HepG2 (cell line): ENCODE measurements at regions of chr17 and their contacts with region 1.

Region 1: DNA sequence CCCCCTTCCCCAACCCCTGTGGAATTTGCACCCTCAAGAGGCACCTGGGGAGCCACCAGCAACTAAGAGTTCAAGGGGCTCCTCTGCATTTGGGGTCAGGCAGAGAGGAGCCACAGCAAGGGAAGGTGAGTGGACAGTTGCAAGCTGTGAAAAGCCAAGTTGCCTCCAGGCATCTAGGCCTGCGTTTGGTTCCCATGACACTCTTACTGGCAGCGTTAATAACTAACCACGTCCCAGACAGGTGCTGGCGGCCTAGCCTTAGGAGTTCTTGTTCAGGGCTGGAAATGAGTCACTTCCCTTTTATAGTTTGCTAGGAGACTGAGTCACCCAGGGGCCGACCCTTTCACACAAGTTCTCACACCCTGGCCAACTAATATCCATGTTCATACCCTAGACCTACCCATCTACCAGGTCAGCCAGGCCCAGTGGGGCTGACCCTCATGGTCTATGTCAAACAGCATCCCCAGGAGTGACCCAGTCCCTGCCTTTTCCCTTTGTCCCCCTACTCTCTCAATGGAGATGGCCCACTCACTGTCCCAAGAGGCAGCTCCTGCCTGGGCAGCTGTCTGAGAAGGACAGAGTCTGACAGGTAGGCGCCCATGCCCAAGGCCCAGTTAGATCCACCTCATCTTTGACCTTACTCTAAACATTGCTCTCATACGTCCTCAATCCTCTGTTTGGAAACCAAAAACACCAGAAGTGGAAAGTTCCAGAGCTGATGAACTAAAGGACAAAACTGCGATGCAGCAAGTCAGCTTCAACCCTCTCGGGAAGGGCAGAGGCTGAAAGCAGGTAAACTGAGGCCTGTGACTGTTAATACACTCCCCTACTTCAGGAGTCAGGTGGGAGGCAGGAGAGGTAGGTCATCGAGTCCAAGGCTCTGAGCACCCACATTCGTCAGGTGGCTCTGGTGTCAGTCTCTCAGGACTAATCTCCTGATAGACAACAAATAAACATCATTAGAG is 300.6 kb downstream of the SOX9 start:
- DNase-seq: peak; percentile 99
- ATAC-seq: peak; percentile 91
- H3K4me3 ChIP-seq: peak overlapping the region in 1 of 3 experiments; percentile 31; a peak in 2 of 6 replicates
- H3K27ac ChIP-seq: peak overlapping the region; percentile 83
- H3K4me1 ChIP-seq: peaks cover 86% of the 10 kb centered on the region
- H3K27me3 ChIP-seq: no peaks in the 10 kb centered on the region
- CTCF ChIP-seq: no peak
- EP300 ChIP-seq: peak in 1 of 2 experiments; percentile 92; a peak in 3 of 4 replicates
- POLR2A ChIP-seq: peak; percentile 48 to 68
- RAD21 ChIP-seq: peak; percentile 34

Region 2: GRCh38 chr17:72407336-72407909 is 14.0 kb before region 1 on chr17:
- CTCF ChIA-PET with region 1: no interaction called
- POLR2A ChIA-PET with region 1: interaction called, 169 read pairs
- in situ Hi-C with region 1: no loop called
- intact Hi-C with region 1: no loop called
- DNase-seq: no peak
- ATAC-seq: no peak
- H3K4me3 ChIP-seq: no peak overlapping the region
- H3K27ac ChIP-seq: peak overlapping the region; percentile 29
- H3K4me1 ChIP-seq: peaks cover 100% of the 10 kb centered on the region
- H3K27me3 ChIP-seq: no peaks in the 10 kb centered on the region
- CTCF ChIP-seq: no peak
- EP300 ChIP-seq: no peak
- POLR2A ChIP-seq: no peak
- RAD21 ChIP-seq: no peak

Region 3: DNA sequence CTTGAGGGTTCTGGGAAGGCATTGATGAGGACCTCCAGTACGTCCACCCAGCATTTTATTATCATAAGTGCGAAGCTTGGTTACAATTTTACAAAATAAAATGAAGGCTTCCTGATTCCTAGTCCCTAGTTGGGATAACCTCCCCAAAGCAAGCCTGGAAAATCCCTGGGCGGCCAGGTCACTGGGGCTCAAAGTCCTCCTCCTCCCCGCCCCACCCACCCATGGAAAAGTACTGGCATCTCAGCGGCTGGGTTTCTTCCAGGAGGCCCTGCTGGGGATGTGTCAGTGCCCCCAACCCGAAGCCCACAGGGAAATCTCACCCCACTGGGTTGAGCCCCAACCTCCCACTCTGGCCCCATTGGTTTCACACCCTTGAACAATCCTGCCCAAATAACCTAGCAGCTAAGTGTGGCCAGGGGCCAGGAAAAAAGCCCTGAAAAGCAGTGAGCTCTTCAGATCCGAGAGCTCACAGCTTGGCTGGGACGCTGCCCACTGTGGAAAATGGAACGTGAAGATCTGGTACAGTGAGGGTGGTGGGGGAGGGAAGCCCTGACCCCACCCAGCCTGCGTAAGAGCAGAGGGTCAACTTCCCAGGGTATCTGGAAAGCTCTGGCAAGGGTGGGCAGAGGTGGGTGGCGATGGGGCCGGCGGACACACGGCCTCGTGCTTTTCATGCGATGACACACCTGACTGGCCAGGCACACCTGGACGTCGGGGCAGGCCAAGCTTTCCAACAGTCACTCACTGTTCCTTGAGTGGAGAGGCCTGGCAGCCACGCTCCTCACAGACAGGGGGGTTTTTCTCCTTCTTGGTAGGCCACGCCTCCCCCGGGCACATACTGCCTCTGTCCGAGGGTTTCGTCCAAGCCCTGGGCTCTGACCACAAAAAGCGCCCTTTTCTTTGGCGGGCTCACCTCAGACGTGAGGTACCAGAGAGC is 23.9 kb after region 1 on chr17:
- CTCF ChIA-PET with region 1: no interaction called
- POLR2A ChIA-PET with region 1: interaction called, 40 read pairs
- in situ Hi-C with region 1: no loop called
- intact Hi-C with region 1: no loop called
- DNase-seq: peak; percentile 84
- ATAC-seq: peak; percentile 55
- H3K4me3 ChIP-seq: peak overlapping the region in 1 of 3 experiments; percentile 48; a peak in 2 of 6 replicates
- H3K27ac ChIP-seq: peak overlapping the region; percentile 96
- H3K4me1 ChIP-seq: peaks cover 97% of the 10 kb centered on the region
- H3K27me3 ChIP-seq: no peaks in the 10 kb centered on the region
- CTCF ChIP-seq: no peak; the same call in 1 of the 2 replicates
- EP300 ChIP-seq: peak in 1 of 2 experiments; percentile 92; a peak in 2 of 4 replicates
- POLR2A ChIP-seq: peak in 1 of 2 experiments; percentile 16; a peak in 1 of 4 replicates
- RAD21 ChIP-seq: no peak

Region 4: GRCh38 chr17:72465191-72466024 is 44.0 kb after region 1 on chr17:
- CTCF ChIA-PET with region 1: no interaction called
- POLR2A ChIA-PET with region 1: interaction called, 15 read pairs
- in situ Hi-C with region 1: no loop called
- intact Hi-C with region 1: loop called (anchors 5 kb)
- DNase-seq: peak; percentile 89
- ATAC-seq: peak; percentile 98
- H3K4me3 ChIP-seq: peak overlapping the region; percentile 7 to 64 (median 43); a peak in 5 of 6 replicates
- H3K27ac ChIP-seq: peak overlapping the region; percentile 70
- H3K4me1 ChIP-seq: peaks cover 98% of the 10 kb centered on the region
- H3K27me3 ChIP-seq: no peaks in the 10 kb centered on the region
- CTCF ChIP-seq: no peak
- EP300 ChIP-seq: peak; percentile 41 to 66; a peak in 2 of 4 replicates
- POLR2A ChIP-seq: peak in 1 of 2 experiments; percentile 48; a peak in 1 of 4 replicates
- RAD21 ChIP-seq: peak; percentile 12; the same call in 1 of the 2 replicates

Region 5: GRCh38 chr17:72515291-72516065 is 94.1 kb after region 1 on chr17:
- CTCF ChIA-PET with region 1: no interaction called
- POLR2A ChIA-PET with region 1: interaction called, 6 read pairs
- in situ Hi-C with region 1: no loop called
- intact Hi-C with region 1: loop called (anchors 2 kb)
- DNase-seq: no peak
- ATAC-seq: no peak
- H3K4me3 ChIP-seq: no peak overlapping the region
- H3K27ac ChIP-seq: no peak overlapping the region
- H3K4me1 ChIP-seq: peaks cover 87% of the 10 kb centered on the region
- H3K27me3 ChIP-seq: no peaks in the 10 kb centered on the region
- CTCF ChIP-seq: no peak
- EP300 ChIP-seq: no peak
- POLR2A ChIP-seq: no peak
- RAD21 ChIP-seq: no peak